Uterus (tissue), 4 donors: ENCODE measurements at regions of chr11 and their contacts with region 1.

Region 1: DNA sequence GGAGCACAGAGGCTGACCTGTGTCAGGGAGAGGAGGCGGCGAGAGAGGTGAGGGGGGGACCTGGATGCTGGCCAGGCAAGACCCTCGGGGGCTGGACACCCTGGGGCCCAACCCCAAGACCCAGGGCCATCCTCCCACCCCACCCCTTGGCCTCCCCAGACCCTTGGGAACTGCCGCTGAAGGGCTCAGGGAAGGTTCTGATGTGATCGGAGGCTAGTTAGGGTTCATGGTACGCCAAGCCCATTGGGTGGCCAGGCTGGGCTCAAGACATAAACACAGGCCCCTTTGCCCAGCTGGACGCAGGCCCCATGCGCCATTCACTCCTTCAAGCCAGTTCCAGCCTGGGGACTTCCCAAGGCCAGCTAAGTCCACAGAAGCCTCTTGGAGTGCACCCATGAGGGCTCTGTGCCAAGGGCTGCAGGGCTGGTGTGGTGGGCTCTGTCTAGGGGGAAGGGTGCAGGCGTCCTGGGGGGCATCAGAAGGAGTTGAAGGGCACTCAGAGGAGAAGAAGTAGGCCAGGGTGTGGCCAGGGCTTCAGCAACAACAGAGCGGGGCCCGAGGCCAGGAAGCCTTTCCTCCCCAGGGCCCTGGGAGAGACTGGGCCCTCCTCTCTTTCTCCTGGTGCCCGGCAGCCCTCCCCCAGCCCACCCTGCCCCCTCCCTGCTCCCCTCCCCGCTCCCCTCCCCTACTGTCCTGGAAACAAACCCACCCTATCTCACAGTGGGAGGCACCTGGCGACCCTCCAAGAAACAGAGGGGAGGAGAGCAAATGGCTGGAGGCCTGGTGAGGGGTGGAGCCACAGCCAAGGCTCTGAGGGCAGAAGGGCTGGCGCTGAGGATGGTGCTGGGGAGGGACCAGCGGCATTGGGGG is 12.9 kb downstream of the TSPAN32 start:
- DNase-seq: peak; percentile 93 to 98
- H3K4me3 ChIP-seq: no peak overlapping the region
- H3K27ac ChIP-seq: peak overlapping the region; percentile 86 to 96
- H3K4me1 ChIP-seq: peaks cover 13 to 26% of the 10 kb centered on the region in 2 donors
- H3K27me3 ChIP-seq: no peaks in the 10 kb centered on the region
- CTCF ChIP-seq: no peak
- POLR2A ChIP-seq: no peak

Region 2: GRCh38 chr11:2205214-2205720 is 109.5 kb before region 1 on chr11:
- intact Hi-C with region 1: no loop called
- DNase-seq: peak; percentile 1 to 5
- H3K4me3 ChIP-seq: no peak overlapping the region
- H3K27ac ChIP-seq: no peak overlapping the region
- H3K4me1 ChIP-seq: no peaks in the 10 kb centered on the region
- H3K27me3 ChIP-seq: no peaks in the 10 kb centered on the region
- CTCF ChIP-seq: no peak
- POLR2A ChIP-seq: no peak

Region 3: DNA sequence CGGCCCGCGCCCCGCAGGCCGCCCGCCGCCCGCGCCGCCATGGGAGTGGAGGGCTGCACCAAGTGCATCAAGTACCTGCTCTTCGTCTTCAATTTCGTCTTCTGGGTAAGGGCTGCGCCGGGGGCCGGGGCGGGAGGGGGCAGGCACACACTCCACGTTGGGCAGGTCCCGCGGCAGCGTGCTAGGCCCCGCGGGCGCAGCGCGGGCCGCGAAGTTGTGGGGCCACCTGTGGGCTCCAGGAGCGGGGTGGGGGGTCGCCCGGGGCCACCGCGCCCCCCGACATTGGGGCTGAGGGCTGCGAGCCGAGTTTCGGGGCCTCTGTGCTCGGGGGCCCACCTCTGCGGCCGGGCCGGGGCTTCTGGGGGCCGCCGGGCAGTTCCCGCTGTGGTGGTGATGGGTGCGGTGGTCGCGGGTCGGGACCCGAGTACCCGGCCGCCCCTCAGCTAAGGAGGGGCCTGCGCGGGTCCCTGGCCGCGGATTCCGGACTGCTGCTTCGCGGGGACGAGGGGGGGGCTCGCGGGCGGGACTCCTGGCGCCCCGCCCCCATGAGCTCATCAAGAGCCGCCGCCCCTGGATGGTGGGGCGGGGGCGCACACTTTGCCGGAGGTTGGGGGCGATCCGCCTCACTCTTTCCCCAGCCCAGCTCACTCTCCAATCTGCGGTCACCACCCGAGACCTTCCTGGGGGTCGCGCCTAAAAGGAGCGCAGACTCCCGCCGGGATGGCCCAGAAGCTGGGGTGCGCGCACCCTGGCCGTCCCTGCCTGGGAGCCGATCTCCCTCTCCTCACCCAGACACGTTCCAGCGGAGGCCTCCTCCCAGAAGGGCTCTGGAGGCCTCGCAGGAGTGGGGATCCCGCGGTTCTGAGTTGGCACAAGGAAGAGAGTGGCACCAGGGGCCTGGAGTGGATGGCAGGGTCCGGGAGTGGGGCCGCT is 63.0 kb after region 1 on chr11:
- intact Hi-C with region 1: loop called (anchors 5 kb)
- DNase-seq: peak; percentile 78 to 82
- H3K4me3 ChIP-seq: peak overlapping the region; percentile 77 to 86
- H3K27ac ChIP-seq: peak overlapping the region; percentile 91 to 99
- H3K4me1 ChIP-seq: peaks cover 22 to 32% of the 10 kb centered on the region in 2 donors
- H3K27me3 ChIP-seq: no peaks in the 10 kb centered on the region
- CTCF ChIP-seq: peak in 1 of 4 experiments; percentile 6
- POLR2A ChIP-seq: peak; percentile 50 to 72